Mammary epithelial cell (primary cell): ENCODE measurements at regions of chr19 and their contacts with region 1.

Region 1: GRCh38 chr19:41083516-41083915 is 4.7 kb upstream of the CYP2A13 start:
- DNase-seq: peak; percentile 27
- H3K4me3 ChIP-seq: no peak overlapping the region
- H3K27ac ChIP-seq: no peak overlapping the region
- H3K4me1 ChIP-seq: no peaks in the 10 kb centered on the region
- H3K27me3 ChIP-seq: peaks cover 2% of the 10 kb centered on the region
- CTCF ChIP-seq: no peak

Region 2: GRCh38 chr19:41000310-41000737 is 83.2 kb before region 1 on chr19:
- CTCF ChIA-PET with region 1: no interaction called
- dilution Hi-C with region 1: loop called (anchors 5 kb)
- in situ Hi-C with region 1: no loop called
- intact Hi-C with region 1: no loop called
- DNase-seq: peak; percentile 41
- H3K4me3 ChIP-seq: no peak overlapping the region
- H3K27ac ChIP-seq: no peak overlapping the region
- H3K4me1 ChIP-seq: no peaks in the 10 kb centered on the region
- H3K27me3 ChIP-seq: no peaks in the 10 kb centered on the region
- CTCF ChIP-seq: no peak